Activated naive CD4-positive, alpha-beta T cell treated with anti-CD3 and anti-CD28 coated beads, Interleukin-2, amount 10 ng/mL, durations not matched to agents 7 days and 5 days (primary cell): ENCODE measurements at regions of chr9 and their contacts with region 1.

Region 1: GRCh38 chr9:124771021-124771866 is at the start of gene NR6A1:
- DNase-seq: peak; percentile 96
- H3K4me3 Mint-ChIP-seq: peak within 1 kb of the TSS; percentile 81
- H3K27ac Mint-ChIP-seq: peak within 1 kb of the TSS; percentile 58
- H3K4me1 Mint-ChIP-seq: peaks cover 52% of the 10 kb centered on the region
- H3K27me3 Mint-ChIP-seq: peaks cover 91% of the 10 kb centered on the region

Region 2: GRCh38 chr9:124686918-124687317 is 84.3 kb before region 1 on chr9:
- CTCF ChIA-PET with region 1: no interaction called
- DNase-seq: no peak
- H3K4me3 Mint-ChIP-seq: no peak overlapping the region
- H3K27ac Mint-ChIP-seq: no peak overlapping the region
- H3K4me1 Mint-ChIP-seq: no peaks in the 10 kb centered on the region
- H3K27me3 Mint-ChIP-seq: peaks cover 10% of the 10 kb centered on the region

Region 3: DNA sequence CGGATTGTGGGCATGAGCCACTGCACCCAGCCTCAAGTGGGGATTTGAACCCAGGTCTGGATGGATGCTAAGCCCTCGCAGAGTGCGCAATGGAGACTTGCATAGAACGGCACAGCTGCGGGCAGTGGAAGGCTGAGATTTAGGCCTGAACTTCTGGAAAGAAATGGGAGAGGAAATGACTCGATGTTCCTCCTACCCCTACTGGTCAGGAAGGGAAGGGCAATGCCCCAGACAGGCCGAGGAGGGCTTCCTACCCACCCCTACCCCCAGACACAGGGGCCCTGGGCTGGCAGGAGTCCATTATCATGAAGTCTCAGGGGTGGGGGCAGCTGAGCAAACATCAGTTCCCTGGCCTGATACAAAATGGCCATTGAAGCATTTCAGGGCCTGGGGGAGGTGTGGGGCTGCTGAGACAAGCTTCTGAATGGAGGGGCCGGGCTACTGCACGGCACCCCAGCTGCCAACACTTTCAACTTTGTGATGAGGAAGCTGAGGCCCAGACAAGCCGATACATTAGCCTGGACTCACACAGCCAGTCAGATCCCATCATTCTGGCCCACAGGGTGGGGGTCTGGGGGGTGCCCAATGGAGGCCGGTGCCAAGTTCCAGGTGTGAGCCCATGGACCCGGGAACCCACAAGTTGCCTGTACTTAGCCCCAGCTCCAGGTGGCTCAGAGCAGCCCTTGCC is 68.5 kb after region 1 on chr9:
- CTCF ChIA-PET with region 1: interaction called, 19 read pairs
- DNase-seq: no peak
- H3K4me3 Mint-ChIP-seq: no peak overlapping the region
- H3K27ac Mint-ChIP-seq: no peak overlapping the region
- H3K4me1 Mint-ChIP-seq: no peaks in the 10 kb centered on the region
- H3K27me3 Mint-ChIP-seq: peaks cover 77% of the 10 kb centered on the region